ENCODE measurements at regions of chr11 and their contacts with region 1.

Region 1: DNA sequence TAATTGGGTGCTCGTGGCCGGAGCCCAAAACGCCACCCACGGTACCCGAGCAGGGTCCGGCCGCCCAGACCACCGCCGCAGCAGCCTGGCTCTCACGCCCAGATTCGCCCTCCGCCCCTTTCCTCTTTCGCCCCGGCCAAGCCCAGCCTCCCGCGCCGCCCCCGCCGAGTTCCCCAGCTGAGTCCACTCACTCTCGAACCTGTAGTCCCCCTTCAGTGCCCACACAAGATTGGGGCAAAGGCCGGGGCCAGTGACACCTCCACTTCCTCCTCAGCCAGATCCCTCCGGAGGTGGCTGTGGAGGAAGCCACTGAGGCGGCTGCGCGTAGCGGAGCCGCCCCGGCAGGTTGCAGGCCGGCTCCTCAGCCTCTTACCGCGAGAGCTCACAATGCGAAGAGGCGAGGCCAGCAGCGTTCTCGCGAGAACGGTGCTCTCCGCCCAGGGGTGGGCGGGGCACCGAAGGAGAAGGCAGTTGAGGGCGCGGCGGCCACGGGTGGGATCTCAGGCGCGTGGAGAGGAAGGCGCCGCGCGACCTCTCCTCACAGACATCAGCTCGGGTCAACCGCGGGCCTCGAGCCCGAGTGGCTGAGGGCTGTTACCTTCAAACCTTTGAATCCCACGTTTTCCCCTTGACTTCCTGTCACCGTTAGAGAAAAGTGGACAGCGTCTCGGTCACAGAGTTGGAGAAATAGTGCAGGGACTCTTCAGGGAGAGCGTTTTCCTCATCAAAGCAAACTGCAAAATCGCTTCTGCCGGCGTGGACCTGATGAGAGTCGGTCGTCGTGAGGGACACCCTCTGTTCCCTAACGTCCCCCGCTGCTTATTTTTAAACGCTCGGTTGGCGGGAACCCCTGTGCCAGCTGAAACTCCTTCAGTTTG is at the start of gene BTBD10:
- DNase-seq: peak; percentile 97
- total RNA-seq, gene BTBD10: 31.3 TPM

Region 2: DNA sequence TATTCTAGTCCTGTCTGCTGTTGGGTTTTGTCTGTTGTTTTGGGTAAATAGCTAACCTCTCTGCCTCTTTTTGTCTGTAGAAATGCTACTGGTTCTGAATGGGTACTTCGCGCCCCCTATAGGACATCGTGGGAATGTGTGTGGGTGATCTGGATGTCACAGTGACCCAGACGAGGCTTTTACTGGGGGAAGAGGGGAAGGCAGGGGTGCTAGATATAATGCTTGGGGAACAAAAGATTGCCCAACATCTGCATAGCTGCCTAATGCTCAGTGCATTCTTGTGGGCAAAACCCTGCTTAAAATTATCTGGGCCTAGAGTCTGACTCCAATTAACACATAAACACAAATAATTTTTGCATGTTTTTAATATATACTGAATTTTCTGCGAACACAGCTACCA is 127.8 kb before region 1 on chr11:
- intact Hi-C with region 1: loop called (anchors 5 kb)
- DNase-seq: no peak

Region 3: GRCh38 chr11:13358596-13359270 is 104.4 kb before region 1 on chr11:
- intact Hi-C with region 1: no loop called
- DNase-seq: no peak

Region 4: DNA sequence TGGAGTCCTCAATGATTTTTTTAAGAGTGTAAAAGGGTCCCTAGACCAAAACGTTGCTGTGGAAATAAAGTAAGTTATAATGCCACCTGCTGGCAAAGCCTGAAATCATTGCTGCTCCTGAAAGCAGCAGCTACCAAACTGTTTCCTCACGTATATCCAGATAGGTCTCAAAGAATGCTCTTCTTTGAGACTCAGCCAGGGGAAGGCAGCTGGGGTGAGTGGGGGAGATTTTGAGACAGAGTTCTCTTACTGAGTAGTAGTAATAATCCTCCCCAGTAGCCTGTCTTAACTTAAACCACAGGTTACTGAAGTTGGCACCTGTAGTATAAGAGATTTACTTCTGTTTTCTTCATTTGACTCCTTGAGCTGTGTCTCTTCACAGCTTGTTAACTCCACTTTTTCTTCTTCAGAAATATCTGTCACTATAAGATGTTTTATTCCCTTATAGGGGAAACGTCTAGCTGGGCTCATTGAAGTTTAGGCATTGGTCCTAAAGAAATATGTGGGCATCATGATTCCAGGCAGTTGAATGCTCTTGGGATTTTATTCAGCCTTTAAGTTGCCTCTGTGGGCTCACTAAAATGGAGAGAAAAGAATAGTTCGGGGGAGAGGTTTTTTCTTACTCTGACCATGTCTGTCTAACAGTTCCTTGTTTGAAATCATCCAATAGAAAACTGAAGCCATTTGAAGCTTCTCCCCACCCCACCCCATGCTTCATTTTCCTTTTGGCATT is 78.1 kb before region 1 on chr11:
- intact Hi-C with region 1: loop called (anchors 10 kb)
- DNase-seq: no peak

Region 5: GRCh38 chr11:13668102-13668956 is 205.2 kb after region 1 on chr11 and contains the start of gene FAR1:
- intact Hi-C with region 1: loop called (anchors 2 kb)
- DNase-seq: peak; percentile 99
- total RNA-seq, gene FAR1: 40.9 TPM

Region 6: GRCh38 chr11:14202251-14203196 is 739.4 kb after region 1 on chr11:
- intact Hi-C with region 1: no loop called
- DNase-seq: no peak

Measured in cardiac septum (tissue), 1 donor.